ENCODE measurements at regions of chr17 and their contacts with region 1.

Region 1: GRCh38 chr17:68909066-68909465 is 46.1 kb downstream of the ABCA8 start:
- DNase-seq: peak; percentile 83

Region 2: DNA sequence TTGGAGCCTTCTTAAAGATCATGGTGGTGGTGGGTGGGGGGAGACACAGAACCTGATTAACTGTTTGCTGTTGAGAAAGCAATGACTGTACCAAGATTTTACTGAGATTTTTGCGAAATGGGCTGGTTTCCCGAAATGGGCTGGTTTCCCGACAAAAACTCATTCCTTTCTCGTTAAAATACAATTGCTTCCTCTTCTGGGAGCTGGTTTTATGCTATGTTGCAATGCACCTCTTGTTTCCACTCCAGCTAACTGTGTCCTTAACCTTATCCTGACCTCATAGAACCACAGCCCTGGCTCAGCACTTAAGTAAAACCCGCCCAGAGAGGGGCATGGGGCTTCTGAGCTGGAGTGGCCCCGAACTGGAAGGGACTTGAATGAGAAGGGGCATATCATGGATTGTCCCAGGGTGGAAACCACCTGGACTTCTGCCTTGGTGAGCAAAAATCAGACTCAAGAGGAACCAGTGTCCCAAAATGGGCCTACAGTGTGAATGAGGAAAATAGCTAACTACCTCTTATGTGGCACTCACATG is 328.8 kb before region 1 on chr17:
- in situ Hi-C with region 1: no loop called
- DNase-seq: no peak

Region 3: DNA sequence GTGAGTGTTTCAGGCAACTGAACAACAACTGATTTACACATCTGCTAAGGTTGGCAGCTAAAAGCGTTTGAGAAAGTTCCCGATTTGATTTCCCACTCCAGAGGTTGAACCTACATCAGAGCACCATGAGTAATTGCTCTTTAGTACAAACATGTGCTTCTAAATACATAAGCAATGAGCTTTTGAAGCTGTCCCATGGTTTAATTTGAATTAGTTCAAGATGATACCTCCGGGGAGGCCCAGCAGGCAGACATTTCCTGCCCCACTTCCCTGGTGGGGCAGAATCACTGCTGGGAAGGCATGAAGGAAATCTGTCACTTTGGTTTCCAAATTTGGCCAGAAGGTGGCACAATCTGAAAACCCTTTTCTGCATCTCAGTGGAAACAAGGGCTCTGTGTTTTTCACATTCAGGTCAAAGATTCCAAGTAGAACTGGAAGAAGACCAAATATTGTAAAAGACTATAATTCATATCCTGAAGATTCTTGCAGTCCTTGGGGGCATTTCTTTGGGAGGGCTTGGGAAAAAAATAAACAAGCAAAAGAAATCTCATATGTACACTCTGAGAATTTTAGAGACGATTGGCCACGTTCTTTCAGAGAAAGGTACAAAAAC is 131.7 kb before region 1 on chr17:
- in situ Hi-C with region 1: loop called (anchors 25 kb)
- DNase-seq: peak; percentile 100

Region 4: GRCh38 chr17:68804777-68805464 is 104.1 kb before region 1 on chr17:
- in situ Hi-C with region 1: no loop called
- DNase-seq: no peak

Region 5: GRCh38 chr17:69030145-69030544 is 121.1 kb after region 1 on chr17:
- in situ Hi-C with region 1: no loop called
- DNase-seq: no peak

Measured in SK-MEL-5 (cell line).